ENCODE measurements at regions of chr9 and their contacts with region 1.

Region 1: DNA sequence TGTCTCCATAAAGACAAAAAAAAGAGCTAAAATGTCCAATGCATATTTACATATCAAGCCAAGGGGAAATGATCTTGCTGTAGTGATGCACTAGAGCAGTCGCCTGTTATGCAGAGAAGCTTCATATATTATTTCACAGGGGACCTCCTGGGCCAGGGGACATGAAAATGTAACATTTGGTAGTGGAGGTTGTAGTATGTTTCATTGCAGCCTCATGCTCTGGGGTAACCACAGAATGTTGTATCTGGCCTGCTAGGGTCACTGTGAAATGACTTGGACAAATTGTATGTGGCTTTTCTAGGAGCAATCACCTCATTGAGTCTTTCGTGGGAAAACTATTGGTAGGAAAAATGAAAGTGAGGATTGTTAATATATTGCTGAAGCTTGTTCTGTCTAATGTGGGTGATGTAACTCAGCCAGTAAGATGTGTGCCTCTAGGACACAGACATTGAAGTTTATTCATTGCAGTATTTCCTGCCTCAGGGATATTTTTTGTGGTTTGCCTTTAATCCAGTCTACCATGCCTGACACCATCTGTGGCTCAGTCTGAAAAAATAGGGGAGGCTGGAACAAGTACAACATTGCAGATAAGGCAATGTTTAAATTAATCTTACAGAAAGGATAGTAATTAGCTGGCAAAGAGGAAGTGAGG is 430.8 kb upstream of the TNC start:
- DNase-seq: no peak
- H3K4me3 ChIP-seq: no peak overlapping the region
- H3K27ac ChIP-seq: no peak overlapping the region
- H3K4me1 ChIP-seq: no peaks in the 10 kb centered on the region
- H3K27me3 ChIP-seq: no peaks in the 10 kb centered on the region
- CTCF ChIP-seq: no peak
- POLR2A ChIP-seq: no peak

Region 2: DNA sequence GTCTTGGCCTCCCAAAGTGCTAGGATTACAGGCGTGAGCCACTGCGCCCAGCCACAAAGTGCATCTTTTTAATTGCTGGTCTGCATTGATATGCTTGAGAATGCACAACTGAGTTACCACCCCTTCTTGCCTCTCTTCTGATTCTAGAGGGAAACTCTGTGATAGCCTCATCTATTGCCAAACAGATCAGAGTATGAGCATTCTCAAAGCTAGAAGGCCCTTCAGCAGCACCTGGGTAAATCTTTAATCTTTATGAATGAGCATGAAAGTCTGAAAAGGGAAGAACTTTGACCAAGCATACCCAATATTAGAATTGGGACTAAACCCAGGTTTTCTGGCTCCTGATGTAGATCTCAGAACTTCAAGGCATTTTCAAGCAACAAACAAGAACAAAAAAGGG is 132.4 kb before region 1 on chr9:
- intact Hi-C with region 1: no loop called
- DNase-seq: no peak
- H3K4me3 ChIP-seq: no peak overlapping the region
- H3K27ac ChIP-seq: no peak overlapping the region
- H3K4me1 ChIP-seq: no peaks in the 10 kb centered on the region
- H3K27me3 ChIP-seq: no peaks in the 10 kb centered on the region
- CTCF ChIP-seq: no peak
- POLR2A ChIP-seq: no peak

Region 3: DNA sequence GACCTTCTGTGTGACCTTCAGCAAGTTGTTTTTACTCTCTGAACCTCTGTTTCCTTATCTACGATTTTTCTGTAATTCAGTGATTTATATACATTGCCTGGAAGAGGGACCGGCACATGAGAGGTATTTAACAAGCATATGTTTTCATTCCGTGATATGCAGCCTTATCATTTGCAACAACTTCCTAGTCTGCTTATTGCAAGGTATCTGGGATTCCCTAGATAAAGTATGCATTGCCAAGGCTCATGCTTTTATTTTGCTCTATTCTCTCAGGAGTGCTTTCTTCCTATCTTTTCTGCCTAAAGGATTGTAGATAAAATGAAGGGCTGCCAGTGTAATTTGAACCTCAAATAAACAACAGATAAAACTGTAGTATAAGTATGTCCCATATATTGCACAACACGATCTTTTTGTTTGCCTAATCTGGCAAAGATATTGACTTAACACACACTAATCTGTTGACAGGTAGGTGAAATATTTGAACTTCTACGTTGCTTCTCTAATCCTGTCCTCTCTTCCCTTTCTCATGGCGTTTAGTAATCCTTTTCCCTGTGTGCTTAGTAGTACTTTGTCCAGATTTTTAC is 53.6 kb before region 1 on chr9:
- intact Hi-C with region 1: loop called in 1 of 2 experiments (anchors 5 kb)
- DNase-seq: no peak
- H3K4me3 ChIP-seq: no peak overlapping the region
- H3K27ac ChIP-seq: no peak overlapping the region
- H3K4me1 ChIP-seq: no peaks in the 10 kb centered on the region
- H3K27me3 ChIP-seq: no peaks in the 10 kb centered on the region
- CTCF ChIP-seq: no peak
- POLR2A ChIP-seq: no peak